Activated CD4-positive, alpha-beta memory T cell treated with anti-CD3 and anti-CD28 coated beads for 36 hours (primary cell): ENCODE measurements at regions of chr9 and their contacts with region 1.

Region 1: DNA sequence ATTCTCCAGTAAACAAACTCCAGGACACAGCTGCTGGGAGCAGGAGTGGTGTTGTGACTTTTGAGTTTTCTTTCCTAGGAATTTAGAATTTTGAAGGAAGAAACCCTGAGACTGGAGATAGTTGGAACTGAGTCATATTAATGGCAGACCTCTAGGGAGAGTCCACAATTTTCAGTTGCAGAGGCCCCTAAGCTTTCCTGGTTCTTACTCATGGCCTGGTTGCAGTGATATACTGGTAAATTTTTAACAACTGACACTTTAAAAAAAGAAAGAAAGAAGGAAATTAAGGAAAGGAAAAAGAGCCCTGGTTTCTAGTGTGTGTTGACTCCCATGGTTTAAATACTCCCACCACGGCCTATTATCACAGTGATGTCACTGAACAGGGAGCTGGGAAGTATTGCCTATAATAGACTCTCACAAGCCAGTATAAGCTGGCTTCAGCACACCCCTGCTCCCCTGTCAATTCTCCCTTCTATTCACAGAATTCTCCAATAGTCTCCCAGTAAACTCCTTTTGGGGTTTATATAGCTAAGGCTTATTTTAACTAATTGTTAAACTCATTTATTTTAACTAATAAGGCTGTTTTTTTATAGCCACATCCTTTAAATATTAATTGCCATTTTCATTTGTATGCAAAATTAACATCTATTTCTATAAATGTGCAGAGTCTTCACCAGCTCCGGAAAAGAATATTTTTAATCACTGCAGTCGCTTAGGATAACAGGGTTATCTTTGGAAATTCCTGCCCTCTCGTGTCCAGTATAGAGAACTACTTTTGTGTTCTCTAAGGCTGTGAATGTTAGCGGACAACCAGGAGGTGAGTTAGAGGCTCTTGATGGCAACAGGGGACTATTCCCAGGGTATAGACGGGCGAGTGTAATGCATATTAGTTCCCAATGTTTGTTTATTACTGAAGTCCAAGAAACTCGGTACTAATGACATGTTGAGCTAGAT is 59.7 kb downstream of the GGTA1 start:
- DNase-seq: no peak
- H3K4me3 Mint-ChIP-seq: no peak overlapping the region
- H3K27ac Mint-ChIP-seq: no peak overlapping the region
- H3K4me1 Mint-ChIP-seq: no peaks in the 10 kb centered on the region
- H3K27me3 Mint-ChIP-seq: peaks cover 9% of the 10 kb centered on the region

Region 2: GRCh38 chr9:121179930-121180681 is 259.9 kb before region 1 on chr9:
- CTCF ChIA-PET with region 1: no interaction called
- POLR2A ChIA-PET with region 1: no interaction called
- intact Hi-C with region 1: no loop called
- DNase-seq: no peak
- H3K4me3 Mint-ChIP-seq: no peak overlapping the region
- H3K27ac Mint-ChIP-seq: peak overlapping the region; percentile 6
- H3K4me1 Mint-ChIP-seq: peaks cover 20% of the 10 kb centered on the region
- H3K27me3 Mint-ChIP-seq: no peaks in the 10 kb centered on the region

Region 3: GRCh38 chr9:121498150-121498486 is 58.1 kb after region 1 on chr9:
- CTCF ChIA-PET with region 1: no interaction called
- POLR2A ChIA-PET with region 1: no interaction called
- intact Hi-C with region 1: loop called (anchors 10 kb)
- DNase-seq: peak; percentile 55
- H3K4me3 Mint-ChIP-seq: peak overlapping the region; percentile 39
- H3K27ac Mint-ChIP-seq: no peak overlapping the region
- H3K4me1 Mint-ChIP-seq: peaks cover 17% of the 10 kb centered on the region
- H3K27me3 Mint-ChIP-seq: peaks cover 47% of the 10 kb centered on the region